ENCODE measurements at regions of chr7 and their contacts with region 1.

Region 1: GRCh38 chr7:35707422-35707821 is 12.5 kb upstream of the HERPUD2 start:
- DNase-seq: no peak
- H3K4me3 ChIP-seq: no peak overlapping the region
- H3K27ac ChIP-seq: no peak overlapping the region
- H3K4me1 ChIP-seq: peaks cover 4 to 6% of the 10 kb centered on the region in 2 donors
- H3K27me3 ChIP-seq: no peaks in the 10 kb centered on the region
- CTCF ChIP-seq: no peak
- POLR2A ChIP-seq: no peak

Region 2: GRCh38 chr7:35645691-35646090 is 61.7 kb before region 1 on chr7:
- intact Hi-C with region 1: no loop called
- DNase-seq: no peak
- H3K4me3 ChIP-seq: no peak overlapping the region
- H3K27ac ChIP-seq: no peak overlapping the region
- H3K4me1 ChIP-seq: peaks cover 12 to 45% of the 10 kb centered on the region in 2 donors
- H3K27me3 ChIP-seq: no peaks in the 10 kb centered on the region
- CTCF ChIP-seq: no peak
- POLR2A ChIP-seq: no peak

Region 3: DNA sequence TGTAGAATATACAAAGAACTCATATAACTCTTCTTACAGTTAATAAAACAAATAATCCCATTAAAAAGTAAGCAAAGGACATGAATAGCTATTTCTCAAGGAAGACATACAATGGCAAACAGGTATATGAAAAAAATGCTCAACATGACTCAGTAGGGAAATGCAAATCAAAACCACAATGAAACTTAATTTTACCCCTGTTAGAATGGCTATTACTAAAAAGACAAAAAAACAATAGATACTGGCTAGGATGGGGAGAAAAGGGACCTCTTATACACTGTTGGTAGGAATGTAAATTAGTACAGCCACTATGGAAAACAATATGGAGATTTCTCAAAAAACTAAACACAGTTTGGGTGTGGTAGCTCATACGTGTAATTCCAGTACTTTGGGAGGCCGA is 50.3 kb before region 1 on chr7:
- intact Hi-C with region 1: no loop called
- DNase-seq: no peak
- H3K4me3 ChIP-seq: no peak overlapping the region
- H3K27ac ChIP-seq: no peak overlapping the region
- H3K4me1 ChIP-seq: no peaks in the 10 kb centered on the region
- H3K27me3 ChIP-seq: no peaks in the 10 kb centered on the region
- CTCF ChIP-seq: no peak
- POLR2A ChIP-seq: no peak

Region 4: DNA sequence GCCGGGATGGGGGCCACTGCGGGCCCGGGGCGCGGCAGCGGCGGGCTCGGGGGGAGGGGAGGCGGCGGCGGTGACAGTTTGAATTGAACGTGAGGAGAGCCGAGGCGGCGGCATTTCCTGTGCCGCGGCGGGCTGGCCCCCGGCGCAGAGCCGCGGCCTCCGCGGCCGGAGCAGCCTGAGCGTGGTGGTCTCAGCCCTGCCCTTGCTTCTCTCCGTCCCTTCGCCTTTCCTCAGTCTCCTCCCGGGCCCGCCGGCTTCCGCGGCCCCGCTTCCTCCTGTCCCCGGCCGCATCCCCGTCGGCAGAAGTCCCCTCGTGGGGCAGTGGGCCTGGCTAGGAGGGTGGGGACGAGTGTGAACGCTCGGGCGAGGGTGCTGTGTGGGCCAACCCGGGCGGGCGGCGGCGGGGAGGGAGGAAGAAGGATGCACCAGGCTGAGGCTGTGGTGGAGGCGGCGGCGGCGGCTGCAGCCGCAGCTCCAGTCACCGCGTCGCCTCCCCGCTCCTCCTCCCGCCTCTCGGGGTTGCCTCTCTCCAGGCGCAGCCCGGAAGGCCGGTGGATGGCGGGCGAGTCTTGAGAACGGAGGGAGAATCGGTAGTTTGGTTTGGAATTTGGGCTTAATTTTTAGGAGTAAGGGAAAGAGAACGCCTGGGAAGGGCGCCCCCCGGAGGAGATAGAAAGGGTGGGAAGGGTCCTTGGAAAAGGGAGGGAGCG is 94.1 kb after region 1 on chr7:
- intact Hi-C with region 1: loop called in 1 of 2 experiments (anchors 5 kb)
- DNase-seq: peak; percentile 74 to 84 (median 77)
- H3K4me3 ChIP-seq: peak overlapping the region; percentile 84 to 97 (median 92)
- H3K27ac ChIP-seq: peak overlapping the region; percentile 78 to 98 (median 95)
- H3K4me1 ChIP-seq: peaks cover 4 to 49% of the 10 kb centered on the region in 2 donors
- H3K27me3 ChIP-seq: no peaks in the 10 kb centered on the region
- CTCF ChIP-seq: peak; percentile 35 to 67 (median 54)
- POLR2A ChIP-seq: no peak